ENCODE measurements at regions of chr17 and their contacts with region 1.

Region 1: DNA sequence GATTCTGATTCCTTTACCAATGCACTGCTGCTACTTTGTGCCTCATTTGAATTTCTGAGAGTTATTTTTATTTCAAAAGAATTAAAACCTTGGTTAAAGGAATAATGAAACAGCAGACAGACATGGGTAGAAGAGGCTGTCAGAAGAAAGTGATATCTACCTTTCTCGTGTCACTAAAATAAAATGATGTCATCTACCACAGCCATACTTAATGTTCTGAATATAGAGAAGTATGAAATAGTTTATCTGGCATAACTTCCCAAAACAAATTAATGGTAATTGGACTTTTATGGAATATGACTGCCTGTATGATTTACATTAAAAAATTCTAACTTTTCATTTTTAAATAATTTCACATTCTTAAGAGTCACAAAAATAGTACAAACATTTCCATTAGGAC is 52.5 kb downstream of the EFCAB13 start:
- DNase-seq: no peak

Region 2: GRCh38 chr17:46836500-46836899 is 539.7 kb before region 1 on chr17:
- intact Hi-C with region 1: loop called in 1 of 2 experiments (anchors 5 kb)
- DNase-seq: no peak

Region 3: DNA sequence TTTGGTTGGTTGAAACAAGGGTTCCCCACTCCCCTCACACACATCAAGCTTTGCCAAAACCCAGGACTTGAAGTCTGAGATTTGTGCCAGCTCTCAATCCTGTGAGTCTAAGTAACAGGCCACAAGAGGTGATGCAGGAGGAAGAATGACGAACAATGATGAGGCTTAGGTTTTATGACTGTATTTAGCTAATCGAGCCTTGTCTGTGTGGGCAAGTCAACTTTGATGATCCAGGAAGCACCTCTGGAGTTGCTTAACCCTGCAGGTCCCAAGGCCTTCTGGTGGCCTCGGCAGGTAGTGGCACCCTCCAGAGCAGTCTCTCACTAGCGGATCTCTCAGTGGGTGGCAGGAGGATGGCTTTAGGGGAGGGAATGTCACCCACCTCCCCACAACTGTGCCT is 623.3 kb after region 1 on chr17:
- intact Hi-C with region 1: no loop called
- DNase-seq: no peak